GM12878 (cell line): ENCODE measurements at regions of chr2 and their contacts with region 1.

Region 1: GRCh38 chr2:121974897-121975661 is 219.6 kb downstream of the TSN start:
- DNase-seq: peak; percentile 60
- ATAC-seq: peak; percentile 98
- H3K4me3 ChIP-seq: peak overlapping the region; percentile 45; the same call in 1 of the 2 replicates
- H3K27ac ChIP-seq: no peak overlapping the region
- H3K4me1 ChIP-seq: no peaks in the 10 kb centered on the region
- H3K27me3 ChIP-seq: no peaks in the 10 kb centered on the region
- CTCF ChIP-seq: peak; percentile 52 to 75 (median 64); a peak in 5 of 6 replicates
- EP300 ChIP-seq: no peak
- POLR2A ChIP-seq: no peak
- RAD21 ChIP-seq: peak; percentile 76

Region 2: DNA sequence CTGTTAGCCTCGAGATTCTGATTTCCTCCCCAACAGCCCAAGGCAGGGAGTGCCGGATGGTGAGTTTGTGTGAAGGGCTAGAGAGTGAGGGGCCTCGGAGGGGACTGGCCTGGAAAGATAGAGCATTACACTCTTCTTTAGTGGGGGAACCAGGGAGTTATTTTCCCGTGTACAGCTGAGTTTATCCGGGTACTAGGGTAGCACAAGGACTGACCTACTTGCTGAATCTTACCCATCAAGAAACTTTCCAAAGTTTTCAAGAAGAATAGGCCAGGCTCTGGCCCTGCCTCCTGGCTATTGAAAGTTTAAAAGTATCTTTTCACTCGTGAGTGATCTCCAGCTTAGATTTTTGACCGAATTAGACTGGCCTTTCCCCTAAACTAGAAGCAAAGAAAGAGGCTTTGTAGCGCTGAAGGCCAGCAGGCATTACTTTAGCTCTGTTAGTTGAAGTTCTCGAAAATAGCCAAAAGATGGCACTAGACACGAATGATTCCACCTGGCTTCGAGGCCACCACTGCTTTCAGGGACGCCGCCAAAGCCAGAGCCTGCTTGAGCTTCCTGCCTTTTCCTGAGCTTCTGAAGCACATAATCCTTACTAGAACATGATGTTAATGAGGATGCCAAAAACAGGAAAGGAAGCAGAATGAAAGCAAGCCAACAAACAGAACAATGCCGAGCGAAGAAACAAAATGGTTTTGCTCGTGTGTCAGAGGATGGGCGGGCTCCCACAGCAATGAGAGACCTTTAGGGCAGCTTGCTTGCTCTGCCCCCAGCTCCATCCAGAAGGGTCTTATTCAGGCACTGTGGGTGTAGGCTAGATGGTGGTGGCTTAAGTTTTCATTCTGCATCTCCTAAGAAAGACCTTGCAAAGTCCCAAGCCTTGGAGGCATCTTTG is 163.9 kb before region 1 on chr2:
- CTCF ChIA-PET with region 1: interaction called, 7 read pairs
- POLR2A ChIA-PET with region 1: no interaction called
- RAD21 ChIA-PET with region 1: interaction called, 4 read pairs
- SMC1A ChIA-PET with region 1: interaction called, 4 read pairs
- in situ Hi-C with region 1: no loop called
- intact Hi-C with region 1: loop called (anchors 2 kb)
- DNase-seq: no peak
- ATAC-seq: peak; percentile 95
- H3K4me3 ChIP-seq: no peak overlapping the region
- H3K27ac ChIP-seq: no peak overlapping the region
- H3K4me1 ChIP-seq: no peaks in the 10 kb centered on the region
- H3K27me3 ChIP-seq: no peaks in the 10 kb centered on the region
- CTCF ChIP-seq: peak; percentile 56 to 68 (median 62); a peak in 5 of 6 replicates
- EP300 ChIP-seq: no peak
- POLR2A ChIP-seq: no peak
- RAD21 ChIP-seq: peak; percentile 80

Region 3: DNA sequence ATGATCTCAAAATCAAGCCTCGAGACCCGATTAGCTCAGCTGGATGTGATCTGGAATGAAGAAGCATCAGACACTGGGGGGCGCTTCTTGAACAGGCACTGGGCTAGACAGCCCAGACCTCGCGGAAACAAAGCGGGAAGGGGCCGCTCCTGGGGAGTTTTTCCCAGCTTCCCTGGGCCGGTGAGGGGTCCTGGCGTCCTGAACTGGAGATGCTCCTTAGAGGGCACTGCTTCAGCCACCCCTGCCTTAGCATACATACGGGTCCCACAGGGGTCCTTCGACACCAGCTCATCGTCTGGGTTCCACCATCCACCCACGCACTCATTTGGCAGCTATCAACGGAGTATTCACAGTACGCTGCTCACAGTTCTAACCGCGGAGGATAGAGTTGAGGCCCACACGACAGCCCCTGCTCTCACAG is 72.9 kb before region 1 on chr2:
- CTCF ChIA-PET with region 1: interaction called, 4 read pairs
- POLR2A ChIA-PET with region 1: no interaction called
- RAD21 ChIA-PET with region 1: interaction called, 6 read pairs
- SMC1A ChIA-PET with region 1: interaction called, 10 read pairs
- in situ Hi-C with region 1: no loop called
- intact Hi-C with region 1: no loop called
- DNase-seq: no peak
- ATAC-seq: no peak
- H3K4me3 ChIP-seq: no peak overlapping the region
- H3K27ac ChIP-seq: no peak overlapping the region
- H3K4me1 ChIP-seq: no peaks in the 10 kb centered on the region
- H3K27me3 ChIP-seq: peaks cover 0 to 3% of the 10 kb centered on the region in 2 experiments; a peak in 2 of 4 replicates
- CTCF ChIP-seq: peak in 2 of 3 experiments; percentile 8 to 29; a peak in 1 of 6 replicates
- EP300 ChIP-seq: no peak
- POLR2A ChIP-seq: peak; percentile 34; the same call in 1 of the 2 replicates
- RAD21 ChIP-seq: no peak

Region 4: GRCh38 chr2:121960251-121960650 is 14.8 kb before region 1 on chr2:
- CTCF ChIA-PET with region 1: interaction called, 3 read pairs
- POLR2A ChIA-PET with region 1: no interaction called
- RAD21 ChIA-PET with region 1: interaction called, 5 read pairs
- SMC1A ChIA-PET with region 1: interaction called, 13 read pairs
- in situ Hi-C with region 1: no loop called
- intact Hi-C with region 1: no loop called
- DNase-seq: no peak
- ATAC-seq: peak; percentile 78
- H3K4me3 ChIP-seq: no peak overlapping the region
- H3K27ac ChIP-seq: no peak overlapping the region
- H3K4me1 ChIP-seq: no peaks in the 10 kb centered on the region
- H3K27me3 ChIP-seq: peaks cover 0 to 1% of the 10 kb centered on the region in 2 experiments; a peak in 2 of 4 replicates
- CTCF ChIP-seq: no peak
- EP300 ChIP-seq: no peak
- POLR2A ChIP-seq: no peak
- RAD21 ChIP-seq: no peak

Region 5: GRCh38 chr2:122136056-122136455 is 161.0 kb after region 1 on chr2:
- CTCF ChIA-PET with region 1: interaction called, 6 read pairs
- POLR2A ChIA-PET with region 1: no interaction called
- RAD21 ChIA-PET with region 1: interaction called, 3 read pairs
- SMC1A ChIA-PET with region 1: interaction called, 7 read pairs
- in situ Hi-C with region 1: no loop called
- intact Hi-C with region 1: loop called (anchors 1 kb)
- DNase-seq: no peak
- ATAC-seq: peak; percentile 91
- H3K4me3 ChIP-seq: no peak overlapping the region
- H3K27ac ChIP-seq: no peak overlapping the region
- H3K4me1 ChIP-seq: no peaks in the 10 kb centered on the region
- H3K27me3 ChIP-seq: no peaks in the 10 kb centered on the region
- CTCF ChIP-seq: peak; percentile 63 to 87 (median 82)
- EP300 ChIP-seq: no peak
- POLR2A ChIP-seq: no peak
- RAD21 ChIP-seq: peak; percentile 63

Region 6: DNA sequence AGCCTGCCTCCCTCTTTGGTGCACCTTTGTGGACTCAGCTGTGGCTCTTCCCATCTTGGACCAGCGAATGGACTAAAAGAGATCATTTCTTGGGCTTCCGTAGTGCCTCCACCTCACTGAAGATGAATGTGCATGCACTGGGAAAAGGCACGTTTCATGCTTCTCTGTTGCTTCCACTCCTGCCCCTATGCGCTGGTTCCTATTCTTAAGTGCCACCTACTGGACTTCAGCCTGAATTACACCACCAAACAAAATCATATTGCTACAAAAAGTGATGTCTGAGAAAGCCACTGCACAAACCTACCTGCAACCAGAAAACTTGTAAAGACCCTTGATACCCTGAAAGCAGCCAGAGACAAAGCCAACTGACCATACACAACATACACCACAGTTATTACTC is 476.0 kb after region 1 on chr2:
- CTCF ChIA-PET with region 1: no interaction called
- POLR2A ChIA-PET with region 1: no interaction called
- RAD21 ChIA-PET with region 1: no interaction called
- SMC1A ChIA-PET with region 1: no interaction called
- in situ Hi-C with region 1: no loop called
- intact Hi-C with region 1: loop called (anchors 10 kb)
- DNase-seq: no peak
- ATAC-seq: no peak
- H3K4me3 ChIP-seq: no peak overlapping the region
- H3K27ac ChIP-seq: no peak overlapping the region
- H3K4me1 ChIP-seq: no peaks in the 10 kb centered on the region
- H3K27me3 ChIP-seq: no peaks in the 10 kb centered on the region
- CTCF ChIP-seq: peak; percentile 10 to 46 (median 26); a peak in 2 of 6 replicates
- EP300 ChIP-seq: no peak
- POLR2A ChIP-seq: no peak
- RAD21 ChIP-seq: peak; percentile 61